ENCODE measurements at regions of chr4 and their contacts with region 1.

Region 1: DNA sequence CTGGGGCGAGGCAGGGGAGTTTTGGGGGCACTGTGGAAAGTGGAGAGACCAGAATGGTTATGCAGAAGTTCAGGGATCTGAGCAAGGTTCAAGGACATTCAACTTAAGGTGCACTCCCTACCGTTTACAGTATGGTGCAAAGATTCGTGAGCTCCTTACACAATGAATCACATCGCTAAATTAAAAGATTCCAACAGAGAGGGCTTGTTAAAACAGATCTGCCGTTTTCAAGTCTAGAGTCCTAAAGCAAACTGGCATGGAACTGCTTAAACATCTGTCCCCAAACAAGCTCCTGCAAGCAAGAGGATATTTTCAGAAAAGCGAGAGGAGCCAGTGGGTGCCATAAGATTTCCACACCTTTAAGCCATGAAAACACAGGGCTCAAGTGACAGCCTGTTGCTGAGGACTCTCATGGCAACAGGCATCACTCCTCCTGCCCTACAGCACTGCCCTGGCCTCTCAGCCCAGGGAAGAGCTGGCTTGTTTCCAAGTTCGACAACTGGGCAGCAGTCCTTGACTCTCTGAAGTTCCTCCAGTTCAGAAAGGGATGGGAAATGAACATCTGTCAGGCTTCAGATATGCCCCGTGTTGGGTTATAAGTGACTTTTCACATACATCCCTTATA is 10.0 kb downstream of the FAM184B start:
- DNase-seq: no peak
- H3K4me3 ChIP-seq: no peak overlapping the region
- H3K27me3 ChIP-seq: no peaks in the 10 kb centered on the region
- CTCF ChIP-seq: no peak

Region 2: GRCh38 chr4:17316566-17316965 is 454.8 kb before region 1 on chr4:
- CTCF ChIA-PET with region 1: no interaction called
- POLR2A ChIA-PET with region 1: no interaction called
- DNase-seq: no peak
- H3K4me3 ChIP-seq: no peak overlapping the region
- H3K27me3 ChIP-seq: no peaks in the 10 kb centered on the region
- CTCF ChIP-seq: no peak

Region 3: DNA sequence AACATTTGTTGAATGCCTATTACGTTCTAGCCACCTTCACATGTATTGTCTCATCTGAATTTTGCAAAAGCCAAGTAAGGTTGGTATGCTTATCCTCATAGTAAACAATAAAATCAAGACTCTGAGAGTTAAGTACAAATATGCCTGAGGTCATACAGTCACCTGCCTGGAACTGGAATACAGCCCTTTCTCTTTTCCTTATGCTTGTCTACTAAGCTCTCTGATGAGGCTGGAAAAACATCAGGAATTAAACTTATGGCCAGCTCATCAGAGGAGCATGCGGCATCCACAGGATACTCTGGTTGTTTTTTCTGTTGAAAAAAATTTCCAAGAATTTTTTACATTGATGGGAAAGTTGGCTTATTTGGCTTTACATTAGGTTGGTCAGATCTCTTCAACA is 74.9 kb after region 1 on chr4:
- CTCF ChIA-PET with region 1: no interaction called
- POLR2A ChIA-PET with region 1: interaction called, 10 read pairs
- DNase-seq: no peak
- H3K4me3 ChIP-seq: no peak overlapping the region
- H3K27me3 ChIP-seq: no peaks in the 10 kb centered on the region
- CTCF ChIP-seq: no peak

Measured in BJ (cell line).